Calu3 (cell line): ENCODE measurements at regions of chr19 and their contacts with region 1.

Region 1: GRCh38 chr19:19613456-19613855 is 5.0 kb downstream of the PBX4 start:
- DNase-seq: no peak
- H3K4me3 Mint-ChIP-seq: no peak overlapping the region
- H3K27ac Mint-ChIP-seq: no peak overlapping the region
- H3K4me1 Mint-ChIP-seq: peaks cover 22% of the 10 kb centered on the region
- H3K27me3 Mint-ChIP-seq: no peaks in the 10 kb centered on the region
- CTCF ChIP-seq: no peak

Region 2: GRCh38 chr19:19627621-19628500 is 14.4 kb after region 1 on chr19 and contains the start of gene LPAR2:
- CTCF ChIA-PET with region 1: no interaction called
- intact Hi-C with region 1: no loop called
- DNase-seq: peak; percentile 76
- H3K4me3 Mint-ChIP-seq: peak within 1 kb of the TSS; percentile 83
- H3K27ac Mint-ChIP-seq: peak within 1 kb of the TSS; percentile 91
- H3K4me1 Mint-ChIP-seq: peaks cover 11% of the 10 kb centered on the region
- H3K27me3 Mint-ChIP-seq: no peaks in the 10 kb centered on the region
- CTCF ChIP-seq: no peak
- total RNA-seq, gene LPAR2: 25.0 and 27.3 TPM in 2 replicates

Region 3: GRCh38 chr19:19651076-19651475 is 37.6 kb after region 1 on chr19:
- CTCF ChIA-PET with region 1: no interaction called
- intact Hi-C with region 1: loop called (anchors 2 kb)
- DNase-seq: no peak
- H3K4me3 Mint-ChIP-seq: no peak overlapping the region
- H3K27ac Mint-ChIP-seq: no peak overlapping the region
- H3K4me1 Mint-ChIP-seq: no peaks in the 10 kb centered on the region
- H3K27me3 Mint-ChIP-seq: no peaks in the 10 kb centered on the region
- CTCF ChIP-seq: no peak